Sigmoid colon (tissue), 7 donors: ENCODE measurements at regions of chr6 and their contacts with region 1.

Region 1: DNA sequence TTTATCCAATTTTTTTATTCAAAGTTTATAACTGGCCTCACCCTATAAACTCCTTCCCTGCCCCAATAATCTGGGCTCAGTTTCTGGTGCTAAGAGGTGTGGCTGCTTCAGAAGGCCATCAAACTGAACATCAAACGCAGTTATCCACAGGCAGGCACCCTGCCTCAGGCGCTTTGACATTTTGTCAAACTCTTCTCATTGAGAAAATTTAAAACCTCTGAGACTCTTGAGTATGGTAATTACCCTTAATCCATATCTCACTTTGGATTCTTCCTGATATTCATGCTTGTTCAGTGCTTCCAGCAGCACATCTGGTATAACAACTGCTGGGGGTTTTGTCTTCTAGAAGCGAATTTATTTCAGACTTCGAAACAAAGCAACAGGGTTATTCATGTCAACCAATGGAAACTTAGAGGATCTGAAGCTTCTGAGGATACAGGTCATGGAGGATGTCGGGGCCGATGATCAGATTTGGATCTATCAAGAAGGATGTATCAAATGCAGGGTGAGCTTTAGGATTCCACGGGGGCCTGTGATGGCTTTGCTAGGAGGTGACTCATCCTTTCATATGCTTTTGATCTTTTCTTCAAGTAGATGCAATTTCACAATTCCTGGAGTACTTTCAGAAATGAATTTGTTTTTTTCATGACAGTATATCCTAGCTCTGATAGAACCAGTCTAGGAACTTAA is 68.2 kb downstream of the RTN4IP1 start:
- DNase-seq: no peak
- H3K4me3 ChIP-seq: no peak overlapping the region
- H3K27ac ChIP-seq: no peak overlapping the region
- H3K4me1 ChIP-seq: no peaks in the 10 kb centered on the region
- H3K27me3 ChIP-seq: no peaks in the 10 kb centered on the region
- CTCF ChIP-seq: no peak
- EP300 ChIP-seq: no peak
- POLR2A ChIP-seq: no peak

Region 2: GRCh38 chr6:106444777-106445507 is 116.2 kb before region 1 on chr6:
- intact Hi-C with region 1: loop called (anchors 2 kb)
- DNase-seq: no peak
- H3K4me3 ChIP-seq: no peak overlapping the region
- H3K27ac ChIP-seq: no peak overlapping the region
- H3K4me1 ChIP-seq: no peaks in the 10 kb centered on the region
- H3K27me3 ChIP-seq: no peaks in the 10 kb centered on the region
- CTCF ChIP-seq: peak; percentile 62 to 77 (median 68)
- EP300 ChIP-seq: no peak
- POLR2A ChIP-seq: no peak

Region 3: GRCh38 chr6:106546691-106547414 is 14.3 kb before region 1 on chr6:
- intact Hi-C with region 1: no loop called
- DNase-seq: no peak
- H3K4me3 ChIP-seq: no peak overlapping the region
- H3K27ac ChIP-seq: peak overlapping the region; percentile 1 to 60 (median 45)
- H3K4me1 ChIP-seq: peaks cover 0 to 19% (median 13%) of the 10 kb centered on the region in 4 donors
- H3K27me3 ChIP-seq: no peaks in the 10 kb centered on the region
- CTCF ChIP-seq: no peak
- EP300 ChIP-seq: no peak
- POLR2A ChIP-seq: no peak